HCT116 (cell line): ENCODE measurements at regions of chr2 and their contacts with region 1.

Region 1: GRCh38 chr2:165239230-165239629 is at the start of gene SCN2A:
- DNase-seq: peak; percentile 47
- ATAC-seq: peak; percentile 67
- H3K4me3 ChIP-seq: no peak within 1 kb of the TSS
- H3K27ac ChIP-seq: no peak within 1 kb of the TSS
- H3K4me1 ChIP-seq: no peaks in the 10 kb centered on the region
- H3K27me3 ChIP-seq: peaks cover 5% of the 10 kb centered on the region; the same call in 1 of the 2 replicates
- CTCF ChIP-seq: peak; percentile 57 to 66 (median 66); a peak in 5 of 6 replicates
- POLR2A ChIP-seq: no peak
- RAD21 ChIP-seq: peak; percentile 68
- total RNA-seq, gene SCN2A: 0.25 TPM

Region 2: DNA sequence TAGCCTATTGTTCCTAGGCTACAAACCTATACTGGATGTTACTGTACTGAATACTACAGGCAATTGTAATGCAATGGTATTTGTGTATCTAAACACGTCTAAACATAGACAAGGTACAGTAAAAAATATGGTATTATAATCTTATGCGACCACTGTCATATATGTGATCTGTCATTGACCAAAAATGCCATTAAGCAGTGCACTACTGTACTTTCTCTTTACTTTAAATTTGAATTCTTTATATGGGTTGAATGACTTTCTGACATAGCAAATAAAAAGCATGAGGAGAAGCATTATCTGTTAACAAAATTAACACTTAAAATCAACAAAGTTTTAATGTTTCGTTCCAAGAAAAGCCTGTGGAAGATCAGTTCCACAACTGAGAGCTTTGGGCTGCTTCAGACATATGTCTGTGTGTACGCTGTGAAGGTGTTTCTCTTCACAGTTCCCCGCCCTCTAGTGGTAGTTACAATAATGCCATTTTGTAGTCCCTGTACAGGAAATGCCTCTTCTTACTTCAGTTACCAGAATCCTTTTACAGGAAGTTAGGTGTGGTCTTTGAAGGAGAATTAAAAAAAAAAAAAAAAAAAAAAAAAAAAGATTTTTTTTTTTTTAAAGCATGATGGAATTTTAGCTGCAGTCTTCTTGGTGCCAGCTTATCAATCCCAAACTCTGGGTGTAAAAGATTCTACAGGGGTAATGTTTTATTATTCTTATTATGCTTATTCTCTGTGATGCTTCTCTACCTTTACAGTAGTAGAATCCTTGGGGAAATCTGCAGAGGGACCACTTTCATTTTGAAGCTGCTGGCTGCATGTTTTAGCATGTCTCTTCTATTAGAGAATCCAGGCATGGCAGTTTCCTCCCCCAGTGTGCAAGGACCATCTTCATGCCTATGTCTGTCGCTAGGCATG is 54.5 kb after region 1 on chr2:
- CTCF ChIA-PET with region 1: interaction called, 7 read pairs
- POLR2A ChIA-PET with region 1: no interaction called
- RAD21 ChIA-PET with region 1: no interaction called
- intact Hi-C with region 1: loop called (anchors 5 kb)
- DNase-seq: peak; percentile 79
- ATAC-seq: peak; percentile 100
- H3K4me3 ChIP-seq: no peak overlapping the region
- H3K27ac ChIP-seq: no peak overlapping the region
- H3K4me1 ChIP-seq: no peaks in the 10 kb centered on the region
- H3K27me3 ChIP-seq: no peaks in the 10 kb centered on the region
- CTCF ChIP-seq: peak; percentile 58 to 77 (median 71)
- POLR2A ChIP-seq: no peak
- RAD21 ChIP-seq: peak; percentile 53

Region 3: GRCh38 chr2:165874445-165875039 is 635.3 kb after region 1 on chr2:
- CTCF ChIA-PET with region 1: interaction called, 12 read pairs
- POLR2A ChIA-PET with region 1: no interaction called
- RAD21 ChIA-PET with region 1: interaction called in 1 of 2 experiments, 3 read pairs
- intact Hi-C with region 1: loop called (anchors 1 kb)
- DNase-seq: peak; percentile 28
- ATAC-seq: peak; percentile 84
- H3K4me3 ChIP-seq: no peak overlapping the region
- H3K27ac ChIP-seq: no peak overlapping the region
- H3K4me1 ChIP-seq: no peaks in the 10 kb centered on the region
- H3K27me3 ChIP-seq: no peaks in the 10 kb centered on the region
- CTCF ChIP-seq: peak; percentile 58 to 63 (median 59); a peak in 5 of 6 replicates
- POLR2A ChIP-seq: no peak
- RAD21 ChIP-seq: peak; percentile 78

Region 4: GRCh38 chr2:165941827-165942226 is 702.6 kb after region 1 on chr2:
- CTCF ChIA-PET with region 1: no interaction called
- POLR2A ChIA-PET with region 1: no interaction called
- RAD21 ChIA-PET with region 1: no interaction called
- intact Hi-C with region 1: no loop called
- DNase-seq: no peak
- ATAC-seq: no peak
- H3K4me3 ChIP-seq: no peak overlapping the region
- H3K27ac ChIP-seq: no peak overlapping the region
- H3K4me1 ChIP-seq: no peaks in the 10 kb centered on the region
- H3K27me3 ChIP-seq: no peaks in the 10 kb centered on the region
- CTCF ChIP-seq: no peak
- POLR2A ChIP-seq: no peak
- RAD21 ChIP-seq: no peak